ENCODE measurements at regions of chr4 and their contacts with region 1.

Region 1: GRCh38 chr4:55312489-55313101 is 33.4 kb upstream of the SRD5A3 start:
- DNase-seq: peak; percentile 58
- H3K4me3 Mint-ChIP-seq: no peak overlapping the region
- H3K27ac Mint-ChIP-seq: no peak overlapping the region
- H3K4me1 Mint-ChIP-seq: peaks cover 20% of the 10 kb centered on the region
- H3K27me3 Mint-ChIP-seq: no peaks in the 10 kb centered on the region

Region 2: DNA sequence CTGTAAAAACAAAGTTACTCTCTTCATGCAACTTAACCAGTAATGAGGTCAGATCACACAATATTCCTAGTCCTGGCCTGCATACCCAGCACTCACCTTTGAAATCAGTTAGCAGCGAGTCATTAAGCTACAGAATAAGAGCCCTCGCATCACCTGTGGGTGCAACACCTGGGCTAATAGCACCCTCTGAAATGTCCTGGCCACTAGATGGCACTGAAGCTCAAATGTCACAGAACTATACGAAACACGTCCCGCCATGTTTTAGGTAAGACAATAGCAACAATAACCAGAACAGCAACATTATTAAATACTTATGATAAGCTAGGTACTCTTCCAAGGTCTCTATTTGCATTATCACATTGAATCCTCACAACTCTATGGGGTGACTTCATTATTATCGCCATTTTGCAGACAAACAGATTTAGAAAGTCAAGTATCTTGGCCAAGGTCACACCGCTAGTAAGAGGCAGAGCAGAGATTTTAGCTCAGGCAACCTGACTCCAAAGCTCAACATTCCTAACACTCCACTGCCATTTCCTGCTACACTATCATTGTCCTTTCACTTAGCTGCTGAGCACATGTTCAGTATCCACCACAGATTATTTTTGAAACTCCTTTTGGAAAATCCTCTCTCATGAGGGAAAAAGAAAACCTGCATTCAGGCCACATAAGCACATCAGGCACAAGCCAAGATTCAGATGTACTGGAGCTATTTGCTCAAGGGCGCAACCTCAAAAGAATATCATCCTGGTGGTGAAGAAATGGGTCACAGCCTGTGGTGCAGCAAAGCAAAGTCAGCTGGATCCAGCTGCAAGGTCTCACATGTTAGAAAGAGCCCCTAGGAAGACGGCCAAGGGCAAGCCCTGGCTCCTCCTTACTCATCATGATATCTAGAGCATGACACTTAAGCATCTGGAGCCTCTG is 127.7 kb before region 1 on chr4:
- CTCF ChIA-PET with region 1: interaction called, 12 read pairs
- intact Hi-C with region 1: no loop called
- DNase-seq: peak; percentile 54
- H3K4me3 Mint-ChIP-seq: no peak overlapping the region
- H3K27ac Mint-ChIP-seq: no peak overlapping the region
- H3K4me1 Mint-ChIP-seq: no peaks in the 10 kb centered on the region
- H3K27me3 Mint-ChIP-seq: no peaks in the 10 kb centered on the region

Region 3: GRCh38 chr4:55554453-55555030 is 241.9 kb after region 1 on chr4:
- CTCF ChIA-PET with region 1: no interaction called
- intact Hi-C with region 1: loop called (anchors 1 kb)
- DNase-seq: no peak
- H3K4me3 Mint-ChIP-seq: no peak overlapping the region
- H3K27ac Mint-ChIP-seq: no peak overlapping the region
- H3K4me1 Mint-ChIP-seq: peaks cover 12% of the 10 kb centered on the region
- H3K27me3 Mint-ChIP-seq: peaks cover 12% of the 10 kb centered on the region

Region 4: DNA sequence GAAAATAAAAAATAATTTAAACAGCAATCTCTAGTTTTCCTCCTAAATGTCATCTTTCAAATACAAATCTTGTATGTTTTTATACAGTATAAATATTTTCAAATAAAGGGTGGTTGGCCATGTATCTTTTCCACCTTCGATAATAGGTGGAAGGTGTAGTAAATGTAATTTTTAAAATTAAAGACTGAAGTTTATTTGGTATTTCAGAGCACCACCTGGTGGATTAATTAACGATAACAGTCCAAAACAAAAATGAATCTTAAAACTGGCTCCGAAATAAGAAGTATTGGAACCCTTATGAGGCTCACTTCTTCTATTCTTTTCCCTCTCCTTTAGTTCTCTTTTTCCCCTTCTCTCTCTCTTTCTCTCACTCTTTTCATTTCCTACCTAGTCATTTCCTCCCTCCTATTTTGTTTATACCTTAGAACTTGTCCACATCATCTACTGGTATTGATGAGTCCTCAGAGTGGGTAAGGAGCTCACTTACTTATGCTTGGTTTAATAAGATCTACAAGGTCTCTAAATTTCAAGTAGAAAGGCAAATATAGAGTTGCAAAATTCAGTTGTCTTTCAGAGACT is 424.1 kb after region 1 on chr4:
- CTCF ChIA-PET with region 1: no interaction called
- intact Hi-C with region 1: loop called (anchors 2 kb)
- DNase-seq: no peak
- H3K4me3 Mint-ChIP-seq: no peak overlapping the region
- H3K27ac Mint-ChIP-seq: no peak overlapping the region
- H3K4me1 Mint-ChIP-seq: no peaks in the 10 kb centered on the region
- H3K27me3 Mint-ChIP-seq: peaks cover 34% of the 10 kb centered on the region

Measured in activated naive CD4-positive, alpha-beta T cell treated with anti-CD3 and anti-CD28 coated beads for 36 hours (primary cell).